ENCODE measurements at regions of chr3 and their contacts with region 1.

Region 1: DNA sequence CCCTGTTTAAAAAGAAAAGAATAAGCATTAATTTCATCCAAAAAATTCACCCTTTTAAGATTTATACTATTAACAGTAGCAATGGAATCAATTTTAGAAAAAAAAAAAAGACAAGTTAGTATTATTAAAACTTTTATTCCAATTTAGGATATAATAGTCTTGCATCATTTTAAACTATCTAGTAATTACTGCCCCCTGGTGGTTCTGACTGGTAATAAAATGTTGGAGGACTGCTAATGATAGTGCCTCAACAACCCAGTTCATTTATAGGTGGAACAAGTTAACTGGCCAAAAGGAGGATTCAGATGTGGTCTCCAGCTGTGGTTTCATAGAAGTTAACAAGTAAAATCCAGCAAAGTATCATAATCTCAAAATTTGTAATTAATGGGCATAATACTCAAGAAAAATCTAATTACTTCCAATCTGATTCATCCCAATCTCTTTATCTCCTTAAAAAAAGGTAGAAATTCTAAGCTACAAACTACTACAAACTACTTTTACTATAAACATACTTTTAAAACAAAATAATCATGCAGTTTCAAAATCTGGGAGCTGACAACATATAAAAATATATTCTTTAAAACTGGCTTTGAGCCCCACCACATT is 30.7 kb upstream of the WDR49 start:
- DNase-seq: peak in 2 of 5 donors; percentile 40
- ATAC-seq: peak in 3 of 4 donors; percentile 49 to 63 (median 53)
- H3K4me3 ChIP-seq: no peak overlapping the region
- H3K27ac ChIP-seq: no peak overlapping the region
- H3K4me1 ChIP-seq: no peaks in the 10 kb centered on the region
- H3K27me3 ChIP-seq: no peaks in the 10 kb centered on the region
- CTCF ChIP-seq: peak; percentile 62 to 85 (median 80)
- POLR2A ChIP-seq: no peak

Region 2: DNA sequence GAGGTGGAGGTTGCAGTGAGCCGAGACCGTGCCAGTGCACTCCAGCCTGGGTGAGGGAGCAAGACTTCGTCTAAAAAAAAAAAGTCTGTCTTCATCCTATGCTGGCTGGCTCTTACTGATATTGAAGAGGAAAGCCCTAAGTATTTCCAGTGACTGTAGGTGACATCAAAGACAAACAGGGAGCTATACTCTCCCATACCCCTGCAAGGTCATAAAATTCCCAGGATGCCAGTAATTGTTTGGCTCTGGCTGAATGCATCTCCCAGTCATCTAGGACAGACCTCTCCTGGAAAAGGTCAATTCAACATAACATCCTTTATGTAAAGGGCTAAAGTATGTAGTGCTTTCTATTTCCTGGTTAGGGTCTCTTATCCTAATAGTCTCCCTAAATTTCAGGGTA is 312.4 kb before region 1 on chr3:
- intact Hi-C with region 1: loop called in 1 of 10 experiments (anchors 10 kb)
- DNase-seq: no peak
- ATAC-seq: no peak
- H3K4me3 ChIP-seq: no peak overlapping the region
- H3K27ac ChIP-seq: no peak overlapping the region
- H3K4me1 ChIP-seq: no peaks in the 10 kb centered on the region
- H3K27me3 ChIP-seq: no peaks in the 10 kb centered on the region
- CTCF ChIP-seq: no peak
- POLR2A ChIP-seq: no peak

Region 3: GRCh38 chr3:167380004-167380689 is 304.3 kb before region 1 on chr3 and contains the start of gene ZBBX:
- intact Hi-C with region 1: loop called in 3 of 10 experiments (anchors 5 to 10 kb)
- DNase-seq: peak; percentile 66 to 88 (median 71)
- ATAC-seq: peak; percentile 78 to 98 (median 92)
- H3K4me3 ChIP-seq: peak within 1 kb of the TSS in 11 of 12 donors; percentile 18 to 59 (median 47)
- H3K27ac ChIP-seq: no peak within 1 kb of the TSS
- H3K4me1 ChIP-seq: peaks cover 0 to 9% (median 1%) of the 10 kb centered on the region in 12 donors
- H3K27me3 ChIP-seq: peaks cover 0 to 7% (median 0%) of the 10 kb centered on the region in 9 donors
- CTCF ChIP-seq: peak; percentile 68 to 92 (median 79)
- POLR2A ChIP-seq: no peak
- total RNA-seq, gene ZBBX: 0.42 TPM in 1 of 9 donors, not detected in the others

Region 4: DNA sequence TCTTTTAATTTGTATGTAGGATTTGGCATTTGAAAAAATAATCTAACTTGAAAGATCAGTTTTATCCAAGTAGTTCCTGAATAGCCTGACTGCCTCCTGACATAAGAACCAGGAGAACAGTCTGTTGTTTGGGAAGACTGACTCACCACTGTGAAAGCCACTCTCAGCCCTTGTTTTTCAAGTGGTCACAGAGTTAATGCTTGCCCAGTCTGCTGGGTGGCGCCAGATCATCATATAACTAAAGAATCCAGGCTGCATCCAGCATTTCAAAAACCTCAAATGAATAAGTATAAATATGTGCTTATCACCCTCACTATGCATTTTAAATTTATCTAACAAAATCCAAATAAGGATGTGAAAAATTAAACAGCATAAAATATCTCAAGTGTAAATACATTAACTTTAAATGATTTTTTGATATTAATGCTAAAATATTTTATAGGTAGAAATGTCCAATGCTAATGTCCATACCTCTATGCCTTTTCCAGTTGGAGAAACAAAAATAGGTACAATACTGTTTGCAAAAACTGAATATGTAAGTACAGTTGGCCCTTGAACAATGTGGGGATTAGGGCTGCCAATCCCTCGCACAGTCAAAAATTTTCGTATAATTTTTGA is 277.5 kb before region 1 on chr3:
- intact Hi-C with region 1: loop called in 7 of 10 experiments (anchors 5 to 10 kb)
- DNase-seq: peak in 2 of 5 donors; percentile 14 to 31
- ATAC-seq: peak; percentile 76 to 97 (median 90)
- H3K4me3 ChIP-seq: no peak overlapping the region
- H3K27ac ChIP-seq: no peak overlapping the region
- H3K4me1 ChIP-seq: no peaks in the 10 kb centered on the region
- H3K27me3 ChIP-seq: no peaks in the 10 kb centered on the region
- CTCF ChIP-seq: peak; percentile 16 to 57 (median 40)
- POLR2A ChIP-seq: no peak

Region 5: GRCh38 chr3:167568634-167569033 is 115.9 kb before region 1 on chr3:
- intact Hi-C with region 1: no loop called
- DNase-seq: no peak
- ATAC-seq: no peak
- H3K4me3 ChIP-seq: no peak overlapping the region
- H3K27ac ChIP-seq: no peak overlapping the region
- H3K4me1 ChIP-seq: no peaks in the 10 kb centered on the region
- H3K27me3 ChIP-seq: no peaks in the 10 kb centered on the region
- CTCF ChIP-seq: no peak
- POLR2A ChIP-seq: no peak

Region 6: DNA sequence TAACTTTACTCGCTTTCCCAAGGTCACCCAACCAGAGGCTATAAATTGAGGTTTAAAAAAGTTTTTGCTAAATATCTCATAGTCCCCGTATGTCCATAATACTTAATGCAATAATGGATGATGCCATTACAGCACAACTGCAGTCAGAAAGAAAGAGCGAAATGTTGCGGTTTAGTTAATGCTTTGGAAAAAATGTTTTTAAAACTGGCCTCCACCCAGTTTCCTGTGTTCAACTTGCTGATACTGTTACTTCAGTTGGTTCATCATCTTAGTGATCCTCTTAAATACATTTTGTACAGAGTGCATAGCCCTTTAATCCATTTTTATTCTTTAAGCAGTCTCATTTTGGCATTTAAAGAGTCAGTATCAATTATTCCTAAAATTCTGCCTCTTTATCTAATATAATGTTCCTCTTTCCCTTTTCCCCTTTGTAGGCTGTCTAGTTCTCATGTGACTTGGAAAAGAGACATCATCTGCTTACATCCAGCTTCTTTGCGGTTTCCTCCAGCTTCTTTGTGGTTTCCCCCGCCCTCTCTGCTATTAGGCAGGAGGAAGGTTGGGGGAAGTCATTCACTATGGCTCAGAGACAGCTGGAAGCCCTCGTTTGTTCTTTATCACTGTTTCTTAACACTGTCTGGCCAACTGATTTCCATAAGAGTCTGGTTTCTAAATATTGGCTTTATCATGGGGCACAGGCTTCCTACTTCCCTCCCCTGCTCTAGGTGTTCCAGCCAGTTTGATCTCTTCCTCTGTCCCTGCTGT is 256.9 kb after region 1 on chr3:
- intact Hi-C with region 1: no loop called
- DNase-seq: peak in 4 of 5 donors; percentile 28 to 54 (median 41)
- ATAC-seq: peak; percentile 67 to 91 (median 86)
- H3K4me3 ChIP-seq: peak overlapping the region in 1 of 12 donors; percentile 2
- H3K27ac ChIP-seq: peak overlapping the region in 5 of 12 donors; percentile 7 to 52 (median 17)
- H3K4me1 ChIP-seq: peaks cover 0 to 16% (median 0%) of the 10 kb centered on the region in 12 donors
- H3K27me3 ChIP-seq: peaks cover 0 to 5% (median 0%) of the 10 kb centered on the region in 9 donors
- CTCF ChIP-seq: no peak
- POLR2A ChIP-seq: no peak